ENCODE measurements at regions of chr6 and their contacts with region 1.

Region 1: GRCh38 chr6:50655848-50656453 is 57.4 kb upstream of the TFAP2D start:
- DNase-seq: no peak
- ATAC-seq: no peak
- H3K4me3 Mint-ChIP-seq: no peak overlapping the region
- H3K27ac Mint-ChIP-seq: no peak overlapping the region
- H3K4me1 Mint-ChIP-seq: no peaks in the 10 kb centered on the region
- H3K27me3 Mint-ChIP-seq: no peaks in the 10 kb centered on the region
- CTCF ChIP-seq: no peak

Region 2: GRCh38 chr6:52020945-52021570 is 1365.1 kb after region 1 on chr6:
- CTCF ChIA-PET with region 1: interaction called, 3 read pairs
- POLR2A ChIA-PET with region 1: no interaction called
- intact Hi-C with region 1: loop called (anchors 2 kb)
- DNase-seq: no peak
- ATAC-seq: no peak
- H3K4me3 Mint-ChIP-seq: no peak overlapping the region
- H3K27ac Mint-ChIP-seq: no peak overlapping the region
- H3K4me1 Mint-ChIP-seq: peaks cover under 1% of the 10 kb centered on the region
- H3K27me3 Mint-ChIP-seq: peaks cover 7% of the 10 kb centered on the region
- CTCF ChIP-seq: peak; percentile 74

Measured in activated B cell treated with CpG ODN at 0.5 μM for 24 hours (primary cell).